GM10248 (cell line): ENCODE measurements at regions of chr12 and their contacts with region 1.

Region 1: GRCh38 chr12:32183650-32184049 is 77.0 kb downstream of the BICD1 start:
- DNase-seq: no peak
- CTCF ChIP-seq: no peak

Region 2: DNA sequence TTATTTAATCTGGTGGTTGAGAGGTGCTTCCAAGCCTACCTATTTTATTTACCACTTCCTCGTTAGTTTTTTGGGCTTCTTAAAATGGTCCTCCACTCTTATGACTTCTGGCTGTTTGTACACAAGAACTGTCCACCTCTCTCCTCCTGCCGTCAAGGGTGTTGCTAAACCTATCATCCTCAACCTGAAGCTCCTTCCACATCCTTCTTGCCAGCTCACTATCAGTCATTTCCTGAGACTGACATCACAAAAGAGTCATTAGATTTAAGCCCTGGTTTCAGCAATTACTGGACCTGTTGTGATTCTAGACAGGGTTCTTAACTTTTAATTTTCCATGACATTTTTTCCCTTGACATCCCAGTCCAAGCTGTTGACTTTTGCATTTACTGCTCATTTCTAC is 14.9 kb after region 1 on chr12:
- CTCF ChIA-PET with region 1: interaction called, 13 read pairs
- POLR2A ChIA-PET with region 1: no interaction called
- DNase-seq: no peak
- CTCF ChIP-seq: no peak